Dorsolateral prefrontal cortex (tissue), 120 donors: ENCODE measurements at regions of chr3 and their contacts with region 1.

Region 1: GRCh38 chr3:40191850-40192448 is 117.6 kb upstream of the EIF1B start:
- DNase-seq: peak; percentile 44 to 76 (median 65)
- H3K4me3 ChIP-seq: no peak overlapping the region
- H3K27ac ChIP-seq: peak overlapping the region in 15 of 59 donors; percentile 4 to 68 (median 25)
- H3K27me3 ChIP-seq: no peaks in the 10 kb centered on the region
- CTCF ChIP-seq: peak; percentile 89 to 99 (median 97)

Region 2: GRCh38 chr3:39406368-39407258 is 785.3 kb before region 1 on chr3 and contains the start of gene RPSA:
- intact Hi-C with region 1: loop called in 1 of 2 experiments (anchors 10 kb)
- DNase-seq: peak; percentile 88 to 97 (median 97)
- H3K4me3 ChIP-seq: peak within 1 kb of the TSS; percentile 63 to 99 (median 85)
- H3K27ac ChIP-seq: peak within 1 kb of the TSS in 57 of 59 donors; percentile 27 to 92 (median 76)
- H3K27me3 ChIP-seq: no peaks in the 10 kb centered on the region
- CTCF ChIP-seq: peak in 53 of 56 donors; percentile 7 to 72 (median 45)
- total RNA-seq, gene RPSA: 285 to 584 (median 399) TPM

Region 3: DNA sequence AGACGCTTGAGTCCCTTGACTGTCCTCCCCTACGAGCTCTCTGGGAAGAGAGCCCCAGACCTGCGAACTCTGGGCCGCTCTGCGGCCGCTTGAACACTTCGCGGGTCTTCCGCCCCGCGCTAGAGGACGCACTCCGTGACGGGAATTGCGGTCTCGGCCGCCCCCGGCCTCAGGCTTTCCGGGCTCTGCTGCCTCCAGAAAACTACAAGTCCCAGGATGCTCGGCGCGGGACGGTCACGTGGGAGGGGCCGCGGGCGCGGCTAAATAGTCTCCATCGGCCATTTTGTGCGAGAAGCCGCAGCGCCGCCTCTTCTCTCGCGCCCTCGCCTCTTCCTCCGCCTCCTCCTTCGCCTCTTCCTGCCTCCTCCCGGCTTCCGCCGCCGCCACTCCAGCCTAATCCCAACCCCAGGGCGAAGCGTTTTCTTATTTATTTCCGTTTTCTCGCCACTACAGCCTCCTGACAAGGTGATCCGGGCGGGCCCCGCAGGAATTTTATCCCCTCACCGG is 117.5 kb after region 1 on chr3 and contains the start of gene EIF1B:
- intact Hi-C with region 1: loop called in 1 of 2 experiments (anchors 2 kb)
- DNase-seq: peak; percentile 96 to 100 (median 98)
- H3K4me3 ChIP-seq: peak within 1 kb of the TSS; percentile 64 to 100 (median 96)
- H3K27ac ChIP-seq: peak within 1 kb of the TSS; percentile 80 to 100 (median 96)
- H3K27me3 ChIP-seq: no peaks in the 10 kb centered on the region
- CTCF ChIP-seq: peak; percentile 85 to 99 (median 98)
- total RNA-seq, gene EIF1B: 50.4 to 146 (median 113) TPM